CD8-positive, alpha-beta memory T cell (primary cell): ENCODE measurements at regions of chr2 and their contacts with region 1.

Region 1: GRCh38 chr2:106085181-106085940 is 108.7 kb downstream of the UXS1 start:
- DNase-seq: peak in 3 of 5 donors; percentile 60 to 73 (median 68)
- H3K4me3 ChIP-seq: peak overlapping the region; percentile 31
- H3K4me3 Mint-ChIP-seq: peak overlapping the region; percentile 8 to 70 (median 67)
- H3K27ac ChIP-seq: no peak overlapping the region
- H3K27ac Mint-ChIP-seq: peak overlapping the region; percentile 87 to 98 (median 92)
- H3K4me1 ChIP-seq: peaks cover 64% of the 10 kb centered on the region
- H3K4me1 Mint-ChIP-seq: peaks cover 49 to 65% (median 65%) of the 10 kb centered on the region in 3 donors
- H3K27me3 ChIP-seq: no peaks in the 10 kb centered on the region
- H3K27me3 Mint-ChIP-seq: no peaks in the 10 kb centered on the region

Region 2: GRCh38 chr2:105576440-105577252 is 508.7 kb before region 1 on chr2:
- CTCF ChIA-PET with region 1: interaction called, 11 read pairs
- POLR2A ChIA-PET with region 1: no interaction called
- DNase-seq: peak in 2 of 5 donors; percentile 32 to 50
- H3K4me3 ChIP-seq: no peak overlapping the region
- H3K4me3 Mint-ChIP-seq: no peak overlapping the region
- H3K27ac ChIP-seq: no peak overlapping the region
- H3K27ac Mint-ChIP-seq: peak overlapping the region in 7 of 8 donors; percentile 1 to 88 (median 55)
- H3K4me1 ChIP-seq: peaks cover 6% of the 10 kb centered on the region
- H3K4me1 Mint-ChIP-seq: peaks cover 7 to 18% (median 13%) of the 10 kb centered on the region in 3 donors
- H3K27me3 ChIP-seq: no peaks in the 10 kb centered on the region
- H3K27me3 Mint-ChIP-seq: peaks cover 1 to 14% of the 10 kb centered on the region in 2 donors

Region 3: DNA sequence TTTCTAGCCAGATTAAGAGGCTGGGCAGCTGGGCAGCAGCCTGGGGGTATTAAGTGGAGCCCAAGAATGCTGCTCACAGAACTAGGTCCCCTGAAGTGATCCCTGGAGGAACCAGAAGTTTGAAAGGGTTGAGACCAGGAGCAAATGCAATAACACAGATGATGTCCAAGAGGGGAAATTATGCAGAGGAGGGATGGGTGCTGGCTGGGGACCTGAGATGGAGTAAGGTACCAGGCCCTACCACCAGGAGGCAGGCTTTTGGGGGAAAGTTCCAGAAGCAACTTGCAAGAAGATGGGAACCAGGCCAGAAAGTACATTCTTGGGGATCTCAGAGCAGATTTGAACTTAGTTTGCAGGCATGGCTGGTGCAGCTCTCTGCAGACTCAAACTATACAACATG is 165.5 kb before region 1 on chr2:
- CTCF ChIA-PET with region 1: interaction called, 13 read pairs
- POLR2A ChIA-PET with region 1: no interaction called
- DNase-seq: peak; percentile 33 to 72 (median 44)
- H3K4me3 ChIP-seq: no peak overlapping the region
- H3K4me3 Mint-ChIP-seq: no peak overlapping the region
- H3K27ac ChIP-seq: no peak overlapping the region
- H3K27ac Mint-ChIP-seq: peak overlapping the region in 1 of 8 donors; percentile 8
- H3K4me1 ChIP-seq: peaks cover 12% of the 10 kb centered on the region
- H3K4me1 Mint-ChIP-seq: peaks cover 23 to 34% (median 33%) of the 10 kb centered on the region in 3 donors
- H3K27me3 ChIP-seq: no peaks in the 10 kb centered on the region
- H3K27me3 Mint-ChIP-seq: no peaks in the 10 kb centered on the region

Region 4: GRCh38 chr2:105926960-105927678 is 158.2 kb before region 1 on chr2:
- CTCF ChIA-PET with region 1: interaction called, 10 read pairs
- POLR2A ChIA-PET with region 1: no interaction called
- DNase-seq: peak; percentile 22 to 80 (median 57)
- H3K4me3 ChIP-seq: peak overlapping the region; percentile 30
- H3K4me3 Mint-ChIP-seq: peak overlapping the region; percentile 10 to 82 (median 58)
- H3K27ac ChIP-seq: no peak overlapping the region
- H3K27ac Mint-ChIP-seq: peak overlapping the region; percentile 66 to 92 (median 83)
- H3K4me1 ChIP-seq: peaks cover 56% of the 10 kb centered on the region
- H3K4me1 Mint-ChIP-seq: peaks cover 54 to 73% (median 73%) of the 10 kb centered on the region in 3 donors
- H3K27me3 ChIP-seq: no peaks in the 10 kb centered on the region
- H3K27me3 Mint-ChIP-seq: no peaks in the 10 kb centered on the region

Region 5: DNA sequence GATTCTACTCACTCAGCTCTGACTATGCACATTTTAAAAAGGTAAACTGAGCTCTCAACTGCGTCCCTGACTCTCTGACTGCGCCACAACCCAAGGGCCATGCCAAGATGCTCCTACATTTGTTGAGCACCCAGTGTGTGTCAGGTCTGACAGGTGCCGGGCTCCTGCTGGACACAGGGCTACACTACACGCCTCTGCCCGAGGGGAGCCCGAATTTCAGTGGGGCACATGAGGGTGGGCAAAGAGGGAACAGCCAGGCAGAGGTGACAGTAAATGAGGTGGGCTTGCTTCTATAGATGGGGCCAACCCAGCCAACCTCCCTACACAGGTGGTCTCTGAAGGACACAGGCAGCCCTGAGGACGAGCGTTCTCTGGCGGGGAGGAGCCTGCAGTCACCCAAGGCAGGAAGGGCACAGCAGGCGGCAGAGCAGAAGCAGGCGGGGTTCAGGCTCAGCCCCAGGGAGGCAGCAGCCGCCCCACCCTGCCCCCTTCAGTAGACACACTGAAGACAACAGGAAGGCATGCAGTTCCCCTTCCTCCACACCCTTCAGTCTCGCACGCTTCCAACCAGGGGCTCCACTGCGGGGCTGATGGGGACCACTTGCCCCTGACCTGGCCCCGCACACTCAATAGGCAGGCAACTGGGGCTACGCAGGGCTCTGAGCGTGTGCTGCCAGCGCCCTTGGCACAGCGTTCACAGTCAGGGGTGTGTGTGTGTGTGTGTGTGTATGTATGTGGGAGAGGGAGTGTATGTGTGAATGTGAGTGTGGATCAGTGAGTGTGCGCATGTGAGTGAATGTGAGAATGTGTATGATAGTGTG is 10.3 kb after region 1 on chr2:
- CTCF ChIA-PET with region 1: interaction called, 23 read pairs
- POLR2A ChIA-PET with region 1: interaction called, 8 read pairs
- DNase-seq: peak; percentile 70 to 91 (median 86)
- H3K4me3 ChIP-seq: peak overlapping the region; percentile 74
- H3K4me3 Mint-ChIP-seq: peak overlapping the region; percentile 79 to 91 (median 81)
- H3K27ac ChIP-seq: peak overlapping the region; percentile 60
- H3K27ac Mint-ChIP-seq: peak overlapping the region; percentile 92 to 99 (median 95)
- H3K4me1 ChIP-seq: peaks cover 68% of the 10 kb centered on the region
- H3K4me1 Mint-ChIP-seq: peaks cover 62 to 86% (median 70%) of the 10 kb centered on the region in 3 donors
- H3K27me3 ChIP-seq: no peaks in the 10 kb centered on the region
- H3K27me3 Mint-ChIP-seq: no peaks in the 10 kb centered on the region

Region 6: GRCh38 chr2:106111882-106112571 is 26.7 kb after region 1 on chr2:
- CTCF ChIA-PET with region 1: no interaction called
- POLR2A ChIA-PET with region 1: no interaction called
- DNase-seq: no peak
- H3K4me3 ChIP-seq: no peak overlapping the region
- H3K4me3 Mint-ChIP-seq: no peak overlapping the region
- H3K27ac ChIP-seq: no peak overlapping the region
- H3K27ac Mint-ChIP-seq: peak overlapping the region in 1 of 8 donors; percentile 33
- H3K4me1 ChIP-seq: no peaks in the 10 kb centered on the region
- H3K4me1 Mint-ChIP-seq: peaks cover 1 to 22% (median 10%) of the 10 kb centered on the region in 3 donors
- H3K27me3 ChIP-seq: no peaks in the 10 kb centered on the region
- H3K27me3 Mint-ChIP-seq: peaks cover 0 to 2% of the 10 kb centered on the region in 2 donors